Spleen (tissue), 13 donors: ENCODE measurements at regions of chr7 and their contacts with region 1.

Region 1: DNA sequence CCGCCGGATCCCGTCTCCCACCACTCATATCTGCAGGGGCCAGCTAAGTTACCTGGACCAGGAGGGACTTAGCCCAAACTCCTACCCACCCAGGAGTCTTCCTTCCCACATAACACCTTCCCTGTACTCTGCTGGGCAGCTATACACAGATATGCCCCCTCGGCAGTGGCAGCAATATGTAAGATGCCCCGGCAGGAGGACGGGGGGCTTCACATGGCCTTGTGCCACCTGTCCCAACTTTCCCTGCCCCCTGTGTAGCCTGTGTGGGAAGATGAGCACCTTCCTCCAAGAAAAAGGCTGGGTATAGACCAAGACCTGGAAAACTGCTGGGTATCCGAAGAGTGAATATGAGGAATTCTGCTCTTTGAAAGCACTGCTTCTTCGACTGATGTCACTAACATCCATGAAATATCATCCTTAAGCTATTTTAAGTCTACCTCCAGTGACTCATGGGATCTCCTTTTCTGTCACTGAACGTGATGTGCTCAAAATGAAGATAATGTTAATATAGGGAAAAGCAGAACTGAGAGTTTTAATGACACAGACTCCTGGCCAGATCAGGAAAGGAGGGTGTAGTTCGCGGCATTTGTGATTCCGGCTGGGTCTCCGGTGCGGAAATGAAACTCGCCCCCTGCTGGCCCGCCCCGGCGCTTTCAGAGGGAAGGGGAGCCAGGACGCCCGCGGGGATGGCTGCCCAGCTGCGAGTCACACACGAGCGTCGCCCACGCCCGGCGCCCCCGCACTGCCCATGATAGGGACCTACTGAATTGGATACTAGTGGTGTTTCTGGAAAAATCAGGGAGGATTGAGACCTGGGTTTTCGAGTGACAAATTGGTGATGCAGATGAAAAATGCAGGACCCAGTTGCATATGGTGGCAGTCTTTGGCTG is 256.9 kb upstream of the NFE2L3 start:
- DNase-seq: peak; percentile 93
- H3K4me3 ChIP-seq: peak overlapping the region in 4 of 8 donors; percentile 1 to 55 (median 14)
- H3K27ac ChIP-seq: peak overlapping the region in 4 of 8 donors; percentile 10 to 69 (median 28)
- H3K4me1 ChIP-seq: peaks cover 9 to 37% (median 28%) of the 10 kb centered on the region in 6 donors
- H3K27me3 ChIP-seq: peaks cover 0 to 83% (median under 1%) of the 10 kb centered on the region in 7 donors
- CTCF ChIP-seq: peak; percentile 47 to 90 (median 77)
- POLR2A ChIP-seq: no peak

Region 2: DNA sequence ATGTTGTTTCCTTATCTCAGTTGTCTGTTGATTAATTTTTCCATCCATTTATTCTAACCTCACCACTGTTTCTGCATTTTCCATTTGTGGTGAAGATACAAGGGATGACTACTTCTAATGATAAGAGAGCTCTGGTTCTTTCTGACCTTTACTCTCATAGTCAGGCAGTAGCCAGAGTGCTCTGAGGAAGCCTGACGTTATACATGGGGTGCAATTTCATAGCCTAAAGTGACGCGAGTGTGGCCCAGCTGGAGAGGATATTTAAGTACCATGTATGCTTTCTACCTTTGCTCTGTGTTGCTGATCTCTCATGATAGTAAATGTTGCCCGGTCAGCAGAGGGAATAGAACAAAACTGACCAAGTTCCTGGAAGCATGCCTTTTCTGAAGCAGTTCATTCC is 736.2 kb before region 1 on chr7:
- intact Hi-C with region 1: no loop called
- DNase-seq: no peak
- H3K4me3 ChIP-seq: no peak overlapping the region
- H3K27ac ChIP-seq: no peak overlapping the region
- H3K4me1 ChIP-seq: peaks cover 0 to 5% (median 0%) of the 10 kb centered on the region in 6 donors
- H3K27me3 ChIP-seq: no peaks in the 10 kb centered on the region
- CTCF ChIP-seq: peak in 1 of 11 experiments; percentile 10
- POLR2A ChIP-seq: no peak

Region 3: DNA sequence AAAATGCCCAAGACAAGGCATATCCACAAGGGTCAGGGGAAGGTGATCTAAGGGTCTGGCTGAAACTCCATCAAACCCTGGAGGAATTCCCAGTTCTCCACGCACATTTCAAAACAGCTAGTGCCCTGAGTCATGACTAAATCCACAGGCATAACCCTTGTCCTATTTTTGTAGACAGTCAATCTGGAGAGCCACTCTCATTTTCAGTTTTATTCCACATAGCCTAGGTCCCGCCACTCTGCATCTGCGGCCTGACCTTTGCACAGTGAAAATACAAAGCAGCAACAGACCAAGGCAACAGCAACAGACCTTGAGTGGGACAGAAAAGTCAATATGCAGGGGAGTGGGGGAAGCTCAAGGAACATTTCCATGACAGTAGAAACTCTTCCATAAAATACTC is 465.4 kb before region 1 on chr7:
- intact Hi-C with region 1: no loop called
- DNase-seq: no peak
- H3K4me3 ChIP-seq: no peak overlapping the region
- H3K27ac ChIP-seq: peak overlapping the region in 2 of 8 donors; percentile 6 to 18
- H3K4me1 ChIP-seq: peaks cover 0 to 9% (median 0%) of the 10 kb centered on the region in 6 donors
- H3K27me3 ChIP-seq: no peaks in the 10 kb centered on the region
- CTCF ChIP-seq: no peak
- POLR2A ChIP-seq: no peak

Region 4: GRCh38 chr7:26052721-26053120 is 157.6 kb after region 1 on chr7:
- intact Hi-C with region 1: loop called (anchors 10 kb)
- DNase-seq: no peak
- H3K4me3 ChIP-seq: no peak overlapping the region
- H3K27ac ChIP-seq: no peak overlapping the region
- H3K4me1 ChIP-seq: no peaks in the 10 kb centered on the region
- H3K27me3 ChIP-seq: peaks cover 0 to 29% (median 0%) of the 10 kb centered on the region in 7 donors
- CTCF ChIP-seq: no peak
- POLR2A ChIP-seq: no peak

Region 5: GRCh38 chr7:26200444-26201246 is 305.5 kb after region 1 on chr7 and contains the start of gene HNRNPA2B1:
- intact Hi-C with region 1: loop called (anchors 10 kb)
- DNase-seq: peak; percentile 99
- H3K4me3 ChIP-seq: peak within 1 kb of the TSS; percentile 51 to 93 (median 89)
- H3K27ac ChIP-seq: peak within 1 kb of the TSS; percentile 99 to 100 (median 100)
- H3K4me1 ChIP-seq: peaks cover 43 to 69% (median 56%) of the 10 kb centered on the region in 6 donors
- H3K27me3 ChIP-seq: no peaks in the 10 kb centered on the region
- CTCF ChIP-seq: peak in 7 of 11 experiments; percentile 7 to 56 (median 51)
- POLR2A ChIP-seq: peak; percentile 100
- total RNA-seq, gene HNRNPA2B1: 267 to 549 (median 418) TPM

Region 6: DNA sequence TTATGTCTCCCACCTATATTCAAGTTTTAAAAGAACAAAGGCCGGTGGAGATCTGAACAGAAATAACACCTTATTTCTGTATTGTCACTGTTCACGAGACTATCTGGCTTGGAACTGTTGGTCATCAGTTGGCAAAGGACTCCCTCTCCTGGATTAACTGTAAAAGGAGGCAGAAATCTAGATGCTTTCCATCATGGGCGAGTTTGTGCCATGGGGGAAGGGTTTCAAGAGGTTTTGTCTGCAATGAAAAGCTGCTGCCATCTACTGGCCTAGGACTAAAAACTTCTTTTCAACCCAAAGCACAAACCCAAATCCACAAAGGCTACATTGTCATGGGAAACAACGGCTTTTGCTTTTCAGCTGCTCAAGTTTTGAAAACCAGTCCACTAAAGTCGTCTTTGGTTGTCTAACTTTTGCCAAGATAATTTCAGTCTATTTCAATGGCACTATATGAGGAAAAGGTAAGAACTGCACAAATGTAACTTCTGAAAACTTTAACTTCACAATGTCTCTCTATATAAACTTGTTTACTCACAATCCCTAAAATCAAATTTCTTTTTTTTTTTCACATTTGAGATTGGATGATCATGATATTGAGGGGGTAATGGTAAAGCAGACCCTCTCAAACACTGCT is 772.5 kb after region 1 on chr7:
- intact Hi-C with region 1: loop called (anchors 5 kb)
- DNase-seq: no peak
- H3K4me3 ChIP-seq: no peak overlapping the region
- H3K27ac ChIP-seq: peak overlapping the region in 1 of 8 donors; percentile 16
- H3K4me1 ChIP-seq: peaks cover 5 to 34% (median 10%) of the 10 kb centered on the region in 6 donors
- H3K27me3 ChIP-seq: no peaks in the 10 kb centered on the region
- CTCF ChIP-seq: peak; percentile 37 to 89 (median 68)
- POLR2A ChIP-seq: no peak